Right ventricle myocardium inferior (tissue), 1 donor: ENCODE measurements at regions of chr6 and their contacts with region 1.

Region 1: GRCh38 chr6:152948150-152948768 is 34.6 kb downstream of the FBXO5 start:
- DNase-seq: no peak
- ATAC-seq: no peak

Region 2: DNA sequence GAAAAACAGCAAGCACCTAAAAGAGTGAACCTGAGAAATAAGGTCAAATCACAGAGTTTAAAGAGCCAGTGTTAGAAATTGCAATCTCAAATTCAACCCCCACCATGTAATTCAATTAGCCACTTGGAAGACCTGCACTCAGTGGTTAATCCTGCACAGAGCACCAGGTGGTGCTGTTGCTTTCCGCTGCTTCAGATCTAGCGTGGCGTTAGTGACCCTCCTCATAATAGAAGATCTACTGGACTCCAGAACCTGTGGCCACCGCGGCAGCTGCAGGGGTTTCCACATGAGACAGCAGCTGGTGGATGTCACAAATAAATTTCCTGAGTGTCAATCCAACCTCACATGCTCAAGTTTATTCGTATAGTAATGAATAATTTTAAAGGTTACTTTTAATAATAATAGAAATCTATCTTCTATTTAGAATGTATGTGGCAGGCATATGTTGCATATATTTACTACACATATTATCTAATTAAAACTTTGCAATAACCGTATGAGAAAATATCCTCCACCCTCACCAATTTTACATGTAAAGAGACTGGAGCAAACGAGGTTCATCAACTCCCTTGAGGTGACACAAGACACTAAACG is 395.5 kb before region 1 on chr6:
- intact Hi-C with region 1: loop called (anchors 10 kb)
- DNase-seq: peak; percentile 82
- ATAC-seq: peak; percentile 82

Region 3: DNA sequence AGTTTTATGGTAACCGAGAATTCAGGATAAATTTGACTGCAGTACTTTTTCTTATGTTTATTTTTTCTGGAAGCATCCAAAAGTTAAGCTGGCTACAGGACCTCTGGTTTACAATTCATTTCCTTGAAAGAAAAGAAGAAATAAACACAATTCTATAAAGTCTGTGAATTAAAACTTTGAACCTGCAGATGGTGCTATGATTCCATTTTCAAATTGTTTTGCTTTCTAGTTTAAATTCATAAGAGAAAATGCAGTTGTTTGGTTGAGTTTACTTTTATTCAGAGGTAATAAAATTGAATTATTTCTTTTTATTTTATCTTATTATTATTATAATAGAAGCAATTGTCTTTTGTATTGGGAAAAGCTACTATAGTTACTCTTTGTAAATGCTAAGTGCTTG is 199.4 kb before region 1 on chr6:
- intact Hi-C with region 1: loop called (anchors 5 kb)
- DNase-seq: no peak
- ATAC-seq: no peak

Region 4: DNA sequence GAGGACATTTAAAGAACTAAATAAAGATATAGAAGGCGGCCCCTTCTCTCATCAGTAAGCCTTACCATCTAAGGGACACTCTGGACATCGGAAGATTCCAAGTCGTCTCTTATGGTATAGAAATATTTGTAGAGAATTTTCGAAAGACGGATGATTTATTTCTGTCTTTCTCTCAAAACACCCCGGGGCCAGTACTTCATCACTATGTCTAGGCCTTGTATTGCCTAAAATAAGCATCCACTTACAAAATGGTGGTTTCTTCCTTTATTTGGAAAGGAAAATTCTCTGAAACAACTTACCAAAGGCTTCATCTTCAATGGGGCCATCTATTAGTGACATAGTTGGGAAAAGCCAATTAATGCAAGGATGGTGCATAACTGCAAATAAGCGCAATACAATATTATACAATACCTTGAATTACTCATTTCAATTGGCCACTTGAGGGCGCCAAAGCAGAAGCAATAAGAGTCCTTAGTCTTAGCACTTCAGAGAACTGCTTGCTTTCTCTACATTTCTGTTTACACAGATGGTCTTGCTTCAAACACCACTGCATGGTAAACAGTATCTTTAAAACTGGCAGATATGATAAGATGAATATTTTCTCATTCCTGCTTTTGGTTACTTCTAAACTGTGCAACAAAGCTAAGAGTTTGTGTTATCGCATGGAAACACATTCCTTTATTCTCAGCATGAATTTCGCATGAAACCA is 84.5 kb before region 1 on chr6:
- intact Hi-C with region 1: loop called (anchors 1 kb)
- DNase-seq: no peak
- ATAC-seq: peak; percentile 76

Region 5: GRCh38 chr6:153023977-153024708 is 75.9 kb after region 1 on chr6:
- intact Hi-C with region 1: loop called (anchors 5 kb)
- DNase-seq: no peak
- ATAC-seq: peak; percentile 64